T-cell (primary cell): ENCODE measurements at regions of chr5 and their contacts with region 1.

Region 1: GRCh38 chr5:130871346-130872086 is 293.5 kb downstream of the HINT1 start:
- DNase-seq: peak in 29 of 35 experiments; percentile 0 to 73 (median 21)
- ATAC-seq: peak in 2 of 4 experiments; percentile 51 to 57
- H3K4me3 ChIP-seq: no peak overlapping the region
- H3K4me3 Mint-ChIP-seq: no peak overlapping the region
- H3K27ac ChIP-seq: no peak overlapping the region
- H3K27ac Mint-ChIP-seq: no peak overlapping the region
- H3K4me1 ChIP-seq: no peaks in the 10 kb centered on the region
- H3K4me1 Mint-ChIP-seq: no peaks in the 10 kb centered on the region
- H3K27me3 ChIP-seq: no peaks in the 10 kb centered on the region
- H3K27me3 Mint-ChIP-seq: no peaks in the 10 kb centered on the region

Region 2: DNA sequence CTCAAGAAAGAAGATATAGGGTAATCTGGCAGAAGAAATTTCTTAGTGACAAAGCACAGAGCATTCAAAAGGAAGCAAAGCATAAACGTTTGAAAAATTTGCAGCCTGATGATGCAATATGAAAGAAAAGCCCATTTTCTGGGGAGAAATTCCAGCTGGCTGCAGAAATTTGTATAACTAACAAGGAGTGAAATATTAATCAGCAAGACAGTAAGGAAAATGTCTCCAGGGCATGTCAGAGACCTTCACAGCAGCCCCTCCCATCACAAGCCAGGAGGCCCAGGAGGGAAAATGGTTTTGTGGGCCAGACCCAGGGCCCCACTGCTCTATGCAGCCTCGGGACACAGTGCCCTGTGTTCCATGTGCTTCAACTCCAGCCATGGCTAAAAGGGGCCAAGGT is 65.9 kb before region 1 on chr5:
- CTCF ChIA-PET with region 1: no interaction called
- POLR2A ChIA-PET with region 1: no interaction called
- DNase-seq: no peak
- ATAC-seq: no peak
- H3K4me3 ChIP-seq: no peak overlapping the region
- H3K4me3 Mint-ChIP-seq: no peak overlapping the region
- H3K27ac ChIP-seq: no peak overlapping the region
- H3K27ac Mint-ChIP-seq: no peak overlapping the region
- H3K4me1 ChIP-seq: no peaks in the 10 kb centered on the region
- H3K4me1 Mint-ChIP-seq: no peaks in the 10 kb centered on the region
- H3K27me3 ChIP-seq: peaks cover 0 to 8% of the 10 kb centered on the region in 2 experiments
- H3K27me3 Mint-ChIP-seq: peaks cover 9 to 36% of the 10 kb centered on the region in 2 donors

Region 3: DNA sequence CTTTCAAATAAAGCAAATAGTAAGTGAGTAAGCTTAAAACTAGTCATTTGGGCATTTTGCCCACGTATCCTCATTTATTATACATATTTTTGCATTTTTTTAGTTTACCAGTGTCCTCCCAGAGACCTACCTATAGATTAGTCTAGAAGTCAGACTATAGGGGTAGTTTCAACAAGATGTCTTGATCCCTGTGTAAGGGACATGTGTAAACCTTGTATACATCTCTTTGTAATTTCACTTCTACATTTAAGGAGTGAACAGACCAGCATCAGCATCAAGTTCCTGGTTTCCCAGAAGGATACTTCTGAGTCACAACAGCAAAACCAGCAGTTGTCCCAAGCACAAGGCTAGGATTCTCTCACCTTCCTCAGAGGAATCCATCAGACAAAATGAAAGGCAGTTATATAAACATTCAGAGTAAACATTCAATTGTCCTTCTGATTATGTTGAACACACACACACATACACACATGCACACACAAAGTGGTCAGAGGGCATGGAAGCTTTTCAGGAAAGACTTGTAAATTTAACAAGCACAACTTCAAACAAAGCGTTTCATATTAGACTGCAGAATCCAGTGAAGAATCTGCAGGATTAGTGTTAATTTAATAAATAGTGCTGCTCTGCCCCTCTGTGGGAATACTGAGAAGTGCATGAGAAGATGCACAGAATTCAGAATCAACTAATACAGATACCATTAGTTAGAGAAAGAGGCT is 238.2 kb after region 1 on chr5:
- CTCF ChIA-PET with region 1: interaction called, 15 to 35 read pairs
- POLR2A ChIA-PET with region 1: interaction called in 1 of 2 experiments, 4 read pairs
- DNase-seq: peak in 20 of 35 experiments; percentile 2 to 67 (median 14)
- ATAC-seq: peak; percentile 59 to 73 (median 62)
- H3K4me3 ChIP-seq: no peak overlapping the region
- H3K4me3 Mint-ChIP-seq: no peak overlapping the region
- H3K27ac ChIP-seq: no peak overlapping the region
- H3K27ac Mint-ChIP-seq: no peak overlapping the region
- H3K4me1 ChIP-seq: peaks cover 0 to 2% of the 10 kb centered on the region in 2 experiments
- H3K4me1 Mint-ChIP-seq: peaks cover 4 to 15% (median 5%) of the 10 kb centered on the region in 3 donors
- H3K27me3 ChIP-seq: no peaks in the 10 kb centered on the region
- H3K27me3 Mint-ChIP-seq: no peaks in the 10 kb centered on the region

Region 4: DNA sequence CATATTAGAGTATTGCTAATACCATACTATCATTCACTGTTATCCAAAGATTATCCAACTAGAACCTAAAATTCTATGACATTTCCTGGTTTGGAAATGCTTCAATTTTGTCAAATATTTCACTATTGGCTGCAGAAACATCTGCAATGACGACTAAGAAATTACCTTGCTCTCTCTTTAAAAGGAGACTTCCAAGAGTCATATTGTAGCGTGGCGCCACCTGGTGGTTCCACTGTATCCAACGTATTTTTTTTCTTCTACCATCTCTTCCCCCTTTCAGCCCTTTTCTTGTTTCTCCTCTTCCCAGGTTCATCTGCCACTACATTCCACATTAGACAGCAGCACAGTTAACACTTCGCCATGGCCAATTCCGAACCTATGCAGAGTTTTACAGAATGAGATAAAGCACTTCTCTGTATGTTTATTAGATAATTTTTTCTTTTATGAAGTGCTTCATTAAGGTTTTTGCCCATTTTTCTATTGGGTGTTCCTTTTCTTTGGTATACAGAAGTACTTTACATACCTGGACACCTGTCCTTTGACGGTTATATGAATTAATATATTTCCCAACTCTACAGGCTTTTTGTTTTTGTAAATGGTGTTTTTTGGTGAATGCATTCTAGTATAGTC is 545.8 kb after region 1 on chr5:
- CTCF ChIA-PET with region 1: interaction called, 4 to 12 read pairs
- POLR2A ChIA-PET with region 1: no interaction called
- DNase-seq: peak; percentile 48 to 92 (median 79)
- ATAC-seq: peak; percentile 49 to 64 (median 58)
- H3K4me3 ChIP-seq: no peak overlapping the region
- H3K4me3 Mint-ChIP-seq: peak overlapping the region; percentile 28 to 44 (median 32)
- H3K27ac ChIP-seq: peak overlapping the region; percentile 4
- H3K27ac Mint-ChIP-seq: peak overlapping the region; percentile 87 to 93
- H3K4me1 ChIP-seq: peaks cover 9 to 16% of the 10 kb centered on the region in 2 experiments
- H3K4me1 Mint-ChIP-seq: peaks cover 47 to 52% (median 51%) of the 10 kb centered on the region in 3 donors
- H3K27me3 ChIP-seq: no peaks in the 10 kb centered on the region
- H3K27me3 Mint-ChIP-seq: no peaks in the 10 kb centered on the region